Naive thymus-derived CD4-positive, alpha-beta T cell (primary cell): ENCODE measurements at regions of chr6 and their contacts with region 1.

Region 1: DNA sequence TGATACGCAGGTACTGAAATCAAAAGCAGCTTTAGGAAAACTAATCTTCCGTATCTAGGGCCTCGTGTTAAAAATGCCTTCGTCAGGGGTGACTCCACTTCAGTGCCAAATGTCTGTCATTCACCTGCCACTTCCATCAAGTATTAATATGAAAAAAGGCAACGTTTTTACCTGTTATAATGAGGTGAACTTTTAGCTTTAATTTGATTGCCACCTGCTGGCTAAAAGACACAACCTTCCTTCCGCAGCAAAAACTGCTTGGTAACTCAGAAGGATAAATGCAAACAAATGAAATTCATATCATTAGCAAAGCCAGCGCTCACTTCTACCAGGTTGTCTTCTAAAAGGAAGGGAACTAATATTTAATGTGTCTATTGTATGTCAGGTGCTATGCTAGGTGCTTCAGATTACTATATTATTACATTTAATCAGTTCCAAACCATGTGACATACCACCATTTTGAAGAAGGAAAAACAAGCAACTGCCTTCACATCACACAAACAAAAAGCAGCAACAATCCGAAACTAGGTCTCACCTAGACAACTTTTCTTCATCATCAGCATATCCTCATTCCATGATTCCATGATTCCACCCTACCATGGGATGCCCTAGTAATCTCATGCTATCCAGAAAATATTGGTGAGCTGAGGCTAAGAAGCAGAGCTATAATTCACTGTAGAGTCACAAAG is 20.6 kb upstream of the ARHGAP18 start:
- DNase-seq: peak in 7 of 9 donors; percentile 22 to 62 (median 50)
- ATAC-seq: peak; percentile 66
- H3K4me3 ChIP-seq: no peak overlapping the region
- H3K4me3 Mint-ChIP-seq: no peak overlapping the region
- H3K27ac ChIP-seq: no peak overlapping the region
- H3K27ac Mint-ChIP-seq: peak overlapping the region in 4 of 9 donors; percentile 46 to 70 (median 50)
- H3K4me1 ChIP-seq: no peaks in the 10 kb centered on the region
- H3K4me1 Mint-ChIP-seq: peaks cover 0 to 13% (median 3%) of the 10 kb centered on the region in 7 donors
- H3K27me3 ChIP-seq: no peaks in the 10 kb centered on the region
- H3K27me3 Mint-ChIP-seq: no peaks in the 10 kb centered on the region

Region 2: DNA sequence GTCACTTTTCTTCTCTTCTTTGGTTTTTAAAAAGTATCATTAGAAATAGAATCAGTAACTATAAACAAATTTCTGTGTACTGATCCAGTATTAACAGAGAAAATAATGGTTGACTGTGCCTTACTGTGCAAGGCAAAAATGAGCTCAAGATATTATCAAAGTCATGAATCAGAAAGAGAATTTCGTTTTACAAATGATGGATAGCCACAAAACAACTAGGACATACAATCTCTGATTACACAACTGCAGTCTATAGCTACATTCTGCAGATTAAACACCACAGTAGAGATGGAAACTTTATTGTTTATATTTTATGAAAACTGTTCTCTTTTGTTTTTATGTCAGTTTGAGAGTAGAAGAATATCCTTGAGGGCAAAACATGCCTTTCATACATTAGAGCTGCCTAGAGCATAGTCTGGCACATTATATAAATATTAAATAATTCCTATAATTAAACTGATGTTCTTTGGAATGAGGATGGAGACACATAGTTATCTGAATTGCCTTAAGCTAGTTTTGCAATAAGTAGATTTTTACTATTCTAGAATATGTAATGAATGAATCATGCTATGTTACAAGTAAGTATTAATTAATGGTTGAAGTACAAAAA is 514.6 kb before region 1 on chr6:
- CTCF ChIA-PET with region 1: no interaction called
- POLR2A ChIA-PET with region 1: no interaction called
- intact Hi-C with region 1: no loop called
- DNase-seq: no peak
- ATAC-seq: no peak
- H3K4me3 ChIP-seq: no peak overlapping the region
- H3K4me3 Mint-ChIP-seq: no peak overlapping the region
- H3K27ac ChIP-seq: no peak overlapping the region
- H3K27ac Mint-ChIP-seq: no peak overlapping the region
- H3K4me1 ChIP-seq: no peaks in the 10 kb centered on the region
- H3K4me1 Mint-ChIP-seq: no peaks in the 10 kb centered on the region
- H3K27me3 ChIP-seq: no peaks in the 10 kb centered on the region
- H3K27me3 Mint-ChIP-seq: peaks cover 0 to 15% (median 3%) of the 10 kb centered on the region in 5 donors

Region 3: DNA sequence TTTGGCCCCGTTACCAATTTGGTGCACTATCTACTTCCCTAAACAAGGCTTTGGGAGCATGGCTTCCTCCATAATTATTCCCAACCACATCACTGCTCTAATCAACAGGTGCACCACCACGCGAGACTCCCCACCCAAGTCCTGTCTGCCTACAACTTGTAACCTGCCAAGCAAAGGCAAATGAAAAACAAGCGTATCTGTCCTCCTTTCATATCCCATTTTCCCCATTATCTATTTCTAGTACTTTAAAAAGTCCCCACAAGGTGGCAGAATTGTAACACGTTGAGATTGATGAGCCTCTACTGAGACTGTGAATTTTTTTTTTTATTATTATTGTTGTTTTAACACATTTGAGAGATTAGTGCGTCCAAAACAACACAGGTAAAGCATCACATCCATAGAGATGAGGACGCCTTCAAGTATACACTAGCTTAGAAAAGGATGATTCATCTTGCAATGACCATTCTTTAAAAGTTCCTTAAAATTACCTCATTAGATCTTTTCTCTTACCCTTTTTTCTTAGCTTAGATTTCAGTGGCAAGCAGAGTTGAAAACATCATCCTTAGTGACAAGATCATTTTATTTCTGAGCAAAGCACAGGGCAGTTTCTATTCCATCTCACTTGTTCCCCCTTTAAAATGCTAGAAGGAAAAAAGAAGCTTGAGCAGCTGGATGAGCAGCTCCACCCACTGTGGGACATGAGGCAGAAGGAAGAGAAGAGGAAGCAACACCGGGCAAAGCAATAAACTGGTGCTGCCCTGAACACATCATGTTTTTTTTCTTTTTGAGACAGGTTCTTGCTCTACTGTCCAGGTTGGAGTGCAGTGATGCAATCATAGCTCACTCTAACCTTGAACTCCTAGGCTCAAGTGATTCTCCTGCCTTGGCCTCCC is 231.4 kb before region 1 on chr6:
- CTCF ChIA-PET with region 1: interaction called, 4 read pairs
- POLR2A ChIA-PET with region 1: no interaction called
- intact Hi-C with region 1: loop called (anchors 1 kb)
- DNase-seq: peak in 7 of 9 donors; percentile 25 to 60 (median 52)
- ATAC-seq: peak; percentile 82
- H3K4me3 ChIP-seq: peak overlapping the region; percentile 37
- H3K4me3 Mint-ChIP-seq: peak overlapping the region; percentile 23 to 81 (median 64)
- H3K27ac ChIP-seq: no peak overlapping the region
- H3K27ac Mint-ChIP-seq: peak overlapping the region in 7 of 9 donors; percentile 0 to 62 (median 2)
- H3K4me1 ChIP-seq: peaks cover 0 to 5% of the 10 kb centered on the region in 2 donors
- H3K4me1 Mint-ChIP-seq: peaks cover 9 to 43% (median 18%) of the 10 kb centered on the region in 7 donors
- H3K27me3 ChIP-seq: no peaks in the 10 kb centered on the region
- H3K27me3 Mint-ChIP-seq: no peaks in the 10 kb centered on the region

Region 4: GRCh38 chr6:129621247-129621646 is 109.4 kb before region 1 on chr6:
- CTCF ChIA-PET with region 1: no interaction called
- POLR2A ChIA-PET with region 1: no interaction called
- intact Hi-C with region 1: loop called (anchors 1 to 2 kb)
- DNase-seq: peak in 4 of 9 donors; percentile 8 to 27 (median 9)
- ATAC-seq: peak; percentile 48
- H3K4me3 ChIP-seq: no peak overlapping the region
- H3K4me3 Mint-ChIP-seq: no peak overlapping the region
- H3K27ac ChIP-seq: no peak overlapping the region
- H3K27ac Mint-ChIP-seq: no peak overlapping the region
- H3K4me1 ChIP-seq: no peaks in the 10 kb centered on the region
- H3K4me1 Mint-ChIP-seq: peaks cover 0 to 5% (median 0%) of the 10 kb centered on the region in 7 donors
- H3K27me3 ChIP-seq: no peaks in the 10 kb centered on the region
- H3K27me3 Mint-ChIP-seq: no peaks in the 10 kb centered on the region

Region 5: DNA sequence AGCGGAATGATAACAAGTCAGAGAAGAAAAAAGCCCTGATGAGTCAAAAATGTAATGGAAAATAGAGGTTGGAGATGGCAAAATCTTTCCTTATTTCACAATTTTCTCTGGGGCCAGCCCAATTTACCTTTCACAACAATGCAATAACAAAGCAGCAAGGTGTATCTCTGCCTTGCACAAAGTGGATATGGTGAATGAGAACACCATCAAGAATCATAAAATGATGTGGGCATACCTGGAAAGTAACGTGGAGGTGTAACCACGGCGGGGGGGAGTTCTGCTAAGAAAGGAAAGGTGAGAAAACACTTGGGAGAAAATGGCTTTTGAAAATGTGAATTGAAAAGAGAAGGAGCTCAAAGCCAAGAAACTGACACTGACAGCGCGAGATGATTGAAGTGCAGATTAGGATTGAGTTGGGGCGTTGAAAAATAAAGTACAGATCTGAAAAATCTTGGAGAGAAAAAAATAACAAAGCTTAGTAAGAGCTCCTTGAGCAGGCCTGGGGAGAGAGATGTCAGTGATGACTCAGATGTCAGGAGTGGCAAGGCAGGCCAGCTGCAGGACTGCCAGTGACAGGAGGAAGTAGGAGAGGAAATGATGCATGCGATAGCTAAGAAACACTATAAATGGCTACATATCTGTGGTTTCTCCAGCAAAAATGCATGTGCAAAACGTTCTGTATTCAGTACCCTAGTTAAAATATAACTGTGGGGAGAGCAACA is 46.9 kb before region 1 on chr6:
- CTCF ChIA-PET with region 1: interaction called, 4 read pairs
- POLR2A ChIA-PET with region 1: no interaction called
- intact Hi-C with region 1: loop called (anchors 1 kb)
- DNase-seq: peak in 8 of 9 donors; percentile 11 to 54 (median 34)
- ATAC-seq: peak; percentile 92
- H3K4me3 ChIP-seq: no peak overlapping the region
- H3K4me3 Mint-ChIP-seq: peak overlapping the region in 8 of 10 donors; percentile 28 to 73 (median 34)
- H3K27ac ChIP-seq: no peak overlapping the region
- H3K27ac Mint-ChIP-seq: peak overlapping the region in 8 of 9 donors; percentile 1 to 81 (median 50)
- H3K4me1 ChIP-seq: peaks cover 31 to 46% of the 10 kb centered on the region in 2 donors
- H3K4me1 Mint-ChIP-seq: peaks cover 38 to 68% (median 45%) of the 10 kb centered on the region in 7 donors
- H3K27me3 ChIP-seq: no peaks in the 10 kb centered on the region
- H3K27me3 Mint-ChIP-seq: no peaks in the 10 kb centered on the region

Region 6: DNA sequence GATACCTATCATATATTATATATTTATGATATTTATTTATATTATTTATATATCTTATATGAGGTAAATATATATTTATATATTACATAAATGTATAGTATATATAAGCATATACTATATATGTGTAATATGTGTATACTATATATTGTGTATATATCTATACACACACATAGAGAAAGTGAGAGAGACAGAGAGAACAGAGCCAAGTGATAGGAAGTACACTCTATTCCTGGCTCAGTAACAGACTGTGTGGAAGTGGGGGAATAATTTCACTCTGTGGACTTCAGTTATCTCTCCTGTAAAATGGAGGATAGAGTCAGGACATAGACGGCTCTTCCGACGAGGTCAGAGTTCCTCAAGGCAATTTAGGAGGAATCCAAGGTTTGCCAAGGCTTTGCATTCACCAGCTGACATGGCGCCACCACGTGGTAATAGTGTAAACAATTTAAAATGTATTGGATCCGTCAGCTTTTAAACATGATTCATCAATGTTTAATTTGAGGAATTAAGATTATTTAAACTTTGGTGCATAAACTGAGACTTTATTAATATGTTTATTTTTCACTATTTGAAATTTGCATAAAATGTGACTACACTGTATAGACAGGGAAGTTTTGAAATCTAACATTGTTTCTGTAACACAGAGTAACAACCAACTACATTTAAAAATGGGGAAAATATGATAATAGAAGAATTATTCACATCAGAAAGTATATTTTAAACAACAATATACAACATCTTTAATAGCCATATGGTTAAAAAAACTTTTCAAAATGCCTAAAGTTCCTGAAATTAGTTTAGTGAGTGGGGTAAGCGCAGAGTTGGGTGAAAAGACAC is 205.9 kb after region 1 on chr6:
- CTCF ChIA-PET with region 1: no interaction called
- POLR2A ChIA-PET with region 1: no interaction called
- intact Hi-C with region 1: loop called in 1 of 2 experiments (anchors 5 kb)
- DNase-seq: peak in 5 of 9 donors; percentile 21 to 47 (median 28)
- ATAC-seq: peak; percentile 77
- H3K4me3 ChIP-seq: no peak overlapping the region
- H3K4me3 Mint-ChIP-seq: no peak overlapping the region
- H3K27ac ChIP-seq: no peak overlapping the region
- H3K27ac Mint-ChIP-seq: no peak overlapping the region
- H3K4me1 ChIP-seq: no peaks in the 10 kb centered on the region
- H3K4me1 Mint-ChIP-seq: peaks cover 0 to 3% (median 0%) of the 10 kb centered on the region in 7 donors
- H3K27me3 ChIP-seq: no peaks in the 10 kb centered on the region
- H3K27me3 Mint-ChIP-seq: peaks cover 19 to 32% (median 24%) of the 10 kb centered on the region in 5 donors